ENCODE measurements at regions of chr7 and their contacts with region 1.

Region 1: DNA sequence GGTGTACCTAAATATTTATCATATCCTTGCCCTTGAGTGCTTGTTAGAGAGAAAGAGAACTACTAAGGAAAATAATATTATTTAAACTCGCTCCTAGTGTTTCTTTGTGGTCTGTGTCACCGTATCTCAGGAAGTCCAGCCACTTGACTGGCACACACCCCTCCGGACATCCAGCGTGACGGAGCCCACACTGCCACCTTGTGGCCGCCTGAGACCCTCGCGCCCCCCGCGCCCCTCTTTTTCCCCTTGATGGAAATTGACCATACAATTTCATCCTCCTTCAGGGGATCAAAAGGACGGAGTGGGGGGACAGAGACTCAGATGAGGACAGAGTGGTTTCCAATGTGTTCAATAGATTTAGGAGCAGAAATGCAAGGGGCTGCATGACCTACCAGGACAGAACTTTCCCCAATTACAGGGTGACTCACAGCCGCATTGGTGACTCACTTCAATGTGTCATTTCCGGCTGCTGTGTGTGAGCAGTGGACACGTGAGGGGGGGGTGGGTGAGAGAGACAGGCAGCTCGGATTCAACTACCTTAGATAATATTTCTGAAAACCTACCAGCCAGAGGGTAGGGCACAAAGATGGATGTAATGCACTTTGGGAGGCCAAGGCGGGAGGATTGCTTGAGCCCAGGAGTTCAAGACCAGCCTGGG is 11.4 kb downstream of the SERPINE1 start:
- DNase-seq: peak; percentile 75

Region 2: GRCh38 chr7:101154693-101155180 is 16.4 kb after region 1 on chr7:
- CTCF ChIA-PET with region 1: interaction called, 21 read pairs
- POLR2A ChIA-PET with region 1: no interaction called
- DNase-seq: no peak

Region 3: GRCh38 chr7:101162551-101163278 is 24.4 kb after region 1 on chr7:
- CTCF ChIA-PET with region 1: interaction called, 21 read pairs
- POLR2A ChIA-PET with region 1: interaction called, 5 read pairs
- DNase-seq: peak; percentile 61

Region 4: GRCh38 chr7:101169838-101170551 is 31.7 kb after region 1 on chr7:
- CTCF ChIA-PET with region 1: interaction called, 11 read pairs
- POLR2A ChIA-PET with region 1: interaction called, 5 read pairs
- DNase-seq: peak; percentile 70

Region 5: DNA sequence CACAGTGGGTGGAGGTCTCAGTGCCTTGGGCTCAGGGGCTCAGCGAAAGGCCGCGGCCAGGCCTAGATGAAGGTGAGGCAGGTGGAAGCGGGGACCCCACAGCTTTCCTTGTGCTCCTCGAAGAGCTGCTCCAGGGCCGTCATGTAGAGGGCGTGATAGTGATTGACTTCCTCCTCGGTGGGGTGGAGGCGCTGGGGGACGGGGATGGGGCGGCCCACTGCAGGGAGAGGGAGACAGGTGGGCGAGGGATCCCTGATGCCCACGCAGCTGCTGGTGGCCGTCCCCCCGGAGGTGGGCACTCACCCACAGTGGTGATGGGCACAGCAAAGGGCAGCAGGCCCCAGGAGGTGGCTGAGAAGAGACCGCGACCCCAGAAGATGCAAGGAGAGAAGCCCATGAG is 57.5 kb after region 1 on chr7:
- CTCF ChIA-PET with region 1: interaction called, 112 read pairs
- POLR2A ChIA-PET with region 1: interaction called, 3 read pairs
- DNase-seq: no peak

Region 6: DNA sequence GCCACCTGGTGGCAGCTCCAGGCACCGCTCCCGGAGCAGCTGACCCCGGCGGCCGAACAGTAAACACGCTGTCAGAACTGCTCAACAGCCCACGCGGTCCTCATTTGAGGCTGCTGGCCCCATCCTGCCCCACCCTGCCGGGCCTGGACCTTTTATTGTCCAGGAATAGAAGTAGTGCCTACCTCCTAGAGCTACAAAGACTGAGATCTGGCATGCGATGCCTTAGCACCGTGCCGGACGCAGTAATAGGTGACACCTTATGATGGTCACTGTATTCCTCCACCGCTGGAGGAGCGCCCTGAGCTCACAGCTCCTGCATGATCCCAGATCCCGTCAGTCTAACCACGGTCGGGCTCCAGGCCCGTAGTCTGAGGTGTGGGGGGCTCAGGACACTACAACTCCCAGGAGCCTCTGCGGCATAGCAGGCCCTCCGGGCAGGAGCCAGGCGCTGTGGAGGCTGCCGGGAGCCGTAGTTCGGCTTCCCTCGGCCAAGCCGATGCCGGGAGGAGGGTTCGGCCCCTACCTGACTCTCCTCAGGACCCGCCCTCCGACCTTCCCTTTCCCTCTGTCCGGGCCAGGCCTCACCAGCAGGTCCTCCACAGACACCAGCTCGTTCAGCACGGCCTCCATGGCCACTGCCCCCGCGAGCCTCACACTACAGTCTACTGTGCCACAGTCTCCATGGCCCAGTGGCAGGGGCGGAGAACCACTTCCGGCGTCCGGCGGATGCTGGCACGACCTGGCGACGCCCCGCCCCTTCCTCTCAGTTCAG is 106.2 kb after region 1 on chr7 and contains the start of gene FIS1:
- CTCF ChIA-PET with region 1: interaction called, 12 read pairs
- POLR2A ChIA-PET with region 1: interaction called, 4 read pairs
- DNase-seq: peak; percentile 83

Region 7: DNA sequence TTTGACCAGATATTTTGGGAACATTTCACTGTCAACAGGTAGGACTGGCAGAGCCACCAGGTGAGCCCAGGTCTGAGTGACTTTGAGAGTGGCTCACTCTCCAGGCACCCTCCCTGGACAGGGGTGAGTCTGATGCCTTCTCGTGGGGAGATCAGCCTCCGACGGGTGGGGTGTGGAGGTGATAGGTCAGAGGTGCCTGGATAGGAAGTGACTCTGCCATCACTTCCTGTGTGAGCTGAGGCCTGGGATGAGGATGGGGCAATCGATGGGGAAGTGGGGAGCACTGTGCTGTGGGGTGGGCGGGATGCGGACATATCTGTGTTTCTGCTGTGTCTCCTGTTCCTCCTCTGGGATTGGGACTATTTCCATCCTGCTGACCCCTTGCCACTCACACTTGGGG is 148.7 kb after region 1 on chr7:
- CTCF ChIA-PET with region 1: interaction called, 17 read pairs
- POLR2A ChIA-PET with region 1: no interaction called
- DNase-seq: no peak

Region 8: DNA sequence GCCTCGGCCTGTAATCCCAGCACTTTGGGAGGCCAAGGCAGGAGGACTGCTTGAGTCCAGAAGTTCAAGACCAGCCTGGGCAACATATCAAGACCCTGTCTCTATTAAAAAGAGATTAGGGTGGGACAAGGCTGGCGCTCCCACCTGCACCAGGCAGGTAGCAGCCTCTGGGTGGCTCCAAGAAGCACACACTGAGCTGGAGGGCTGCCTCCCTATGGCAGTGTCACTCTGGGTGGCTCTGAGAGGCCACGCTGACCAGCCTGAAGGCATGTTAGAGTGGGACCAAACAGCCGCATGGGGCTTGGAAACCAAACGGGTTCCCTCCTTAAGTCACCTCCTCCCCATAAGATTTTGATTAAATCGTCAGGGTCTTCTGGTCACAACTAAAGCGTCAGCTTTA is 204.6 kb after region 1 on chr7:
- CTCF ChIA-PET with region 1: no interaction called
- POLR2A ChIA-PET with region 1: no interaction called
- DNase-seq: no peak